Activated T-helper 2 cell treated with anti-CD3 and anti-CD28 coated beads, Interferon-gamma antibody, Interleukin-2, Interleukin-4, amounts not matched to agents 10 μg/mL and 5 μg/mL and 100 μg/mL, durations not matched to agents 14 hours and 24 hours and 36 hours (primary cell): ENCODE measurements at regions of chr1 and their contacts with region 1.

Region 1: GRCh38 chr1:115062542-115063011 is 26.7 kb downstream of the TSPAN2 start:
- DNase-seq: peak; percentile 92
- H3K4me3 Mint-ChIP-seq: no peak overlapping the region
- H3K27ac Mint-ChIP-seq: peak overlapping the region; percentile 93
- H3K4me1 Mint-ChIP-seq: peaks cover 36% of the 10 kb centered on the region
- H3K27me3 Mint-ChIP-seq: no peaks in the 10 kb centered on the region

Region 2: DNA sequence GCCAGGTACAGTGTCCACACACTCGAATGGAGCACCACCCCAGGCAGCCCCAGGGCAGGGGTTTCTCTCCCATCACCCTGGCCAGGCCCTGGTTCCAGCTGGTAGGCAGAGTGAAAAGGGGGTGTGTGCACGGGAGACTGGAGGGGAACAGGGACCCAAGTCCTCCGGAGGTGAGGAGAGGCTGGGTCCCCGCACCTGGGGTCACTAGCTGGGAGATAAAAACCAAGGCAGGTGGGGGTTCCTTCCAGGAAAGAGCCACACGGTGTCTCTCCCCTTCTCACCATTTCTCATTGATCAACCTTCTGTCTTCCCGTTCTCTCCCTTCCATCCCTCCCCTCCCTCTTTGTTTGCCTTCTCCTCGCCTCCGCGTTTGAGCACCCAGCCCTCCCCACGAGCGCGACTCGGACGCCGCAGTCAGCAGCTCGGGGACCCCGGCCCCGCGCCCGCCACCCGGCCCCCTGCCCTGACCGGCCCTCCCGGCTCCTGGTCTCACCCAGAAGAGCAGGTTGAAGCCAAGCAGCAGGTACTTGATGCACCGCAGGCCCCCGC is 26.4 kb after region 1 on chr1:
- intact Hi-C with region 1: no loop called
- DNase-seq: no peak
- H3K4me3 Mint-ChIP-seq: peak overlapping the region; percentile 65
- H3K27ac Mint-ChIP-seq: no peak overlapping the region
- H3K4me1 Mint-ChIP-seq: peaks cover 15% of the 10 kb centered on the region
- H3K27me3 Mint-ChIP-seq: peaks cover 37% of the 10 kb centered on the region

Region 3: DNA sequence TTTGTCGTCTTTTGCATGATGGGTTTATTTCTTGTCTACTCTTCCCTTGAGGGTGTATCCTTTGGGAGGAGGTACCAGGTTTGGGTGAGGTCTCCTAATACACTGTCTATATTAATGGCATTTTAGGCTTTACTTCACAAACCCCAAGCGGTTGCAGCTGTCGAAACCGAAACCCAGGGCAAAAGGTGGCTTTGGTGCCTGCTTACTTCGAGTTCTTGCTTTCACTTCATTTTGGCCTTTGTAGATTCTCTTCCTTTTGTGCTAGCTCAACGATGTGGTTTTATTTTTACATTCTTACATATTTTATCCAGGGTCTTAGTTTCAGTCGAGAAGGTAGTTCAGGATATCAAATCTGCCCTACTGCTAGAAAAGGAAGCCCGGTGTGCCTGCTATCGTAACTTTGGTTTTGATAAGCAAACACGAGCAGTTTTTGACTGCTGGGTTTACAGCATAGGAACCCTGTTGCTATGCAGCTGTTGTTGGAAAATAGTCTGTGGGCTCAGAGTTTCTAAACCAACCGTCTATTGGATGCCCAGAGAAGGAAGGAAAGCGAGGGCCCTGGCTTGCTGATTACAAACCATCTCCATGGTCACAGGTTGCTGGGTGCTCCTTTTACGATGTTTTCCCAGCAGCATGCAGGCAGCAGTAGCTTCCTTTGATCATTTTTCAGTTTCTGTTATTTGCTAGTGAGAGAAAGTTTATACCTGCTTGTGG is 36.6 kb after region 1 on chr1:
- intact Hi-C with region 1: loop called (anchors 1 kb)
- DNase-seq: peak; percentile 73
- H3K4me3 Mint-ChIP-seq: peak overlapping the region; percentile 87
- H3K27ac Mint-ChIP-seq: peak overlapping the region; percentile 93
- H3K4me1 Mint-ChIP-seq: peaks cover 31% of the 10 kb centered on the region
- H3K27me3 Mint-ChIP-seq: peaks cover 13% of the 10 kb centered on the region

Region 4: DNA sequence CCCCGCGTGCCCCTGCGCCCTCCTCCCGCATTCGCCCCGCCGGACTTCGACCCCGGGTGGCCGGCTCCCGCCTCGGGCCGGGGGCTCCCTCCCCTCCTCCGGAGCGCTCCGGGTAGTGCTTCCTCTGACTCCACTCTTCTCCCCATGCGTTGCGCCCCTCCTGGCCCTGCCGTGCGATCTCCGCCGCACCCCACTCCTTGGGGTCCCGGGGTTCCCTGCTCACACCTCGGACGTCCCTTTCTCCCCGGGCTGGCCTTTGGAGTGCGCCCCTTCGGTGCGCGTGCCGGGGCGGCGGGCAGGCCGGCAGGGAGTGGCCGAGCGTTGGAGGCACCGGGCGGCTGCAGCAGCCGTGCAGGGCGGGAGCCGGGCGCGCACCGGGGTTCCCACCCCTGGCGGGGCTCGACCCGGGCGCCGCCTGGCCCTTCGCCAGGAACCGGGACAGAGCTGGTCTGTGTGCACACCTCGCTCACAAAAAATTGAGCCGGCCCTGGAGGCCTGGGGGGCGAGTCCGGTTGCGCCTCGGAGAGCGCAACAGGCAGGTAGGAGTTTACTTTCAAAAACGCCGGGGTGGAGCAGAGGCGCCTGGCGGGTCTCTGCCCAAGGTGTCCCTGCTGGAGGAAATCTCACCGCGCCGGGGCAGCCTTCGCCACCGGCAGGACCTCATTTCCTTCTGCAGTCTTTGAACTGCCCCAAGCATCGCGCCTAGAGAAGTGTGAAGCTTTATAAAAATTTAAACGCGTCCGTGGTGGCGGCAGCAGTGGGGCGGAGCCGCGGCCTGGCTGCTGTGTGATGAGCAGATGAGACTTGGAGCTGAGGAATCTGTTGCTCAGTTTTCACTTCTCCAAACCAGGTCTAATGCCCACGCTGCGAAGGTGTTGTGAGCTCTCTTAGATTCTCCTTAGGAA is 579.8 kb after region 1 on chr1:
- intact Hi-C with region 1: loop called (anchors 2 kb)
- DNase-seq: peak; percentile 43
- H3K4me3 Mint-ChIP-seq: peak overlapping the region; percentile 83
- H3K27ac Mint-ChIP-seq: peak overlapping the region; percentile 25
- H3K4me1 Mint-ChIP-seq: peaks cover 15% of the 10 kb centered on the region
- H3K27me3 Mint-ChIP-seq: peaks cover 20% of the 10 kb centered on the region